ENCODE measurements at regions of chr12 and their contacts with region 1.

Region 1: DNA sequence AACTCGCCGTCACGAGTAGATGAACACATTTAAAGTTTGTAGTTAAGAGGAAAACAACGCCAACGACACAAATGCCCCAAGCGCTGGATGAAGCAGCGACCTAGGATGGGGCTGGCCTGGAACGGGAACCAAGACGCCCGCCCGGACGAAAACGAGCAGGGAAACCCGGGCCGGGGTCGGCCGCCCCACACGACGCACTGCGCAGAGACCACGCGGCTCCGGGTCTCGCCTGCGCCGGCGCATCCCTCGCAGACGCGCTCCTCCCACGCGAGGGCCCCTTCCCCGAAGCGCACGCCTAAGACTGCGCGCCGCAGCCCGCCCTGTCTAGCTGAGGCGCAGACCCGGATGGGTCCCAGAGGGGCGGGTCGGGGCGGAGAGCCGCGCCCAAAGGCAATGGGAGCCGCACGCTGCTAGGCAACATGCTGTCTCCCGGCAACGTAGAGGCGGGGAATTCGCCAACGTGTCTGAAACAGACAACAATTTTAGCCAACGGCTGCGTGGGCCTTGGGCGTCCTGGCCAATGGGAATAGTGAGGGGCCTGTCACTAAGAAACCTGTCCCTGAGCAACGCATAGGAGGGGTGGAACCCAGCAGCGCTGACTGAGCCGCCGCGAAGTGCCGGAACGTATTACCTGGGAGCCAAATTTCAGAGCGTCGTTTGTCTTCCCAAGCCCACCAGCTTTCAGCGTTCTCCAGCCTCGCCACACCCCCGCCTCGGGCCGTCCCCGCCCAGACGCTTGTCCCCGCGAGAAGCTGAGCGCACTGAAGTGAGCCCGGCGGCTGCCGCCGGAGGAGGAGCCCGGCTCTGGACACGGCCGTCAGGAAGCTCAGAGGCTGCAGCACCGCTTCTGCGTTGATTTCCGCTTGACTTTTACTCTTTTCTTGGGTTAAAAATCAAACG is 21.0 kb upstream of the CHFR start:
- DNase-seq: peak; percentile 99
- H3K4me3 Mint-ChIP-seq: peak overlapping the region; percentile 86
- H3K27ac Mint-ChIP-seq: peak overlapping the region; percentile 92
- H3K4me1 Mint-ChIP-seq: peaks cover 17% of the 10 kb centered on the region
- H3K27me3 Mint-ChIP-seq: peaks cover 4% of the 10 kb centered on the region

Region 2: GRCh38 chr12:132761032-132761920 is 147.1 kb before region 1 on chr12 and contains the start of gene ANKLE2:
- CTCF ChIA-PET with region 1: interaction called, 5 read pairs
- POLR2A ChIA-PET with region 1: interaction called, 3 read pairs
- intact Hi-C with region 1: loop called (anchors 2 kb)
- DNase-seq: peak; percentile 86
- H3K4me3 Mint-ChIP-seq: peak within 1 kb of the TSS; percentile 88
- H3K27ac Mint-ChIP-seq: peak within 1 kb of the TSS; percentile 97
- H3K4me1 Mint-ChIP-seq: peaks cover 26% of the 10 kb centered on the region
- H3K27me3 Mint-ChIP-seq: no peaks in the 10 kb centered on the region
- total RNA-seq, gene ANKLE2: 112 to 123 TPM

Region 3: GRCh38 chr12:132887513-132888351 is 20.7 kb before region 1 on chr12 and contains the start of gene CHFR:
- CTCF ChIA-PET with region 1: interaction called, 9 read pairs
- POLR2A ChIA-PET with region 1: interaction called, 5 read pairs
- intact Hi-C with region 1: loop called (anchors 1 kb)
- DNase-seq: peak; percentile 98
- H3K4me3 Mint-ChIP-seq: peak within 1 kb of the TSS; percentile 99
- H3K27ac Mint-ChIP-seq: peak within 1 kb of the TSS; percentile 100
- H3K4me1 Mint-ChIP-seq: peaks cover 17% of the 10 kb centered on the region
- H3K27me3 Mint-ChIP-seq: no peaks in the 10 kb centered on the region
- total RNA-seq, gene CHFR: 41.2 to 42.9 TPM

Region 4: DNA sequence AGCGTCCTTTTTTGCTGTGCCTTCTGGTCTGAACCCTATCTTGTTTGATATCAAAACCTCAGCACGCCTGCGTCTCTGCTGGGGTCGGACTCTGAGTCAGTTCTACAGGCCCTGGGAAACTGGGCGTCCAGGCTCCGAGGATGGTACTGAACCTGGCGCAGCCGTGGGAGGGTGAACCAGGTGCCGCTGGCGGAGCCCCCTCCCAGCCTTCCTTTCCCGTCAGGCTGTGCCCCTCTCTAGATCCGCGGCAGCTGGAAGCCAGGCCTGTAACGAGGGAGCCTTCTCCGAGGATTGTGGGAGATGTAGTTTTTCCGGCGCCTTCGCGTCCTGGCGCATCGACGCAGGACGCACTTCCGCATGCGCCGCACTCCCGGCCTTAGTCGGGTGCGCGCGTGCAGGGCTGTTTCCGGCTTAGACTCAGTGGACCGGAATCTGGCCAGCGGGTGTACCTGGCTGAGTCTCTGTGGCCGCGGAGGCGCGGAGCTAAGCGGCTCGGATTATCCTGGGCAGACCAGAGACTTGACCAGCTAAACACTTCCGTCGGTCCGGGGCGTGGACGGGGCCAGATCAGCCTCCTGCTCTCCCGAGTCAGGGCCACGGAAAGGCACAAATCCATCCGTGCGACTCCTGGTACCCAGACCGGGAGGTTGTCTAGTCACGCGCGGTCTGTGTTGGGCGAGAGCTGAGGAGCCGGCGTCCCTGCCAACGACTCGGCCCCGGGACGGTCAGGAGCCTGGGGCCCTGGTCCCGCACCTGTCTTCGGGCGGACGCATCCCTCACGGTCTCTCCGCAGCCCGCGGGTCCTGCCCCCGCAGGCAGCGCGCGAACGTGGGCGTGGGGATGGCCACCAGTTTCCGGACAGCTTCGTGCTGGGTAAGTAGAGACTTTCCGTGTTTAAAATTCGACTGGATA is 77.9 kb after region 1 on chr12 and contains the start of gene ZNF26:
- CTCF ChIA-PET with region 1: interaction called, 8 read pairs
- POLR2A ChIA-PET with region 1: interaction called, 4 read pairs
- intact Hi-C with region 1: loop called (anchors 1 kb)
- DNase-seq: peak; percentile 92
- H3K4me3 Mint-ChIP-seq: peak within 1 kb of the TSS; percentile 89
- H3K27ac Mint-ChIP-seq: peak within 1 kb of the TSS; percentile 94
- H3K4me1 Mint-ChIP-seq: peaks cover 27% of the 10 kb centered on the region
- H3K27me3 Mint-ChIP-seq: no peaks in the 10 kb centered on the region
- total RNA-seq, gene ZNF26: 10.2 to 10.8 TPM

Region 5: GRCh38 chr12:133130038-133130807 is 221.8 kb after region 1 on chr12 and contains the starts of genes ZNF10 and ZNF891:
- CTCF ChIA-PET with region 1: no interaction called
- POLR2A ChIA-PET with region 1: interaction called, 3 read pairs
- intact Hi-C with region 1: loop called (anchors 1 kb)
- DNase-seq: peak; percentile 98
- H3K4me3 Mint-ChIP-seq: peak within 1 kb of the TSS; percentile 97
- H3K27ac Mint-ChIP-seq: peak within 1 kb of the TSS; percentile 96
- H3K4me1 Mint-ChIP-seq: peaks cover 14% of the 10 kb centered on the region
- H3K27me3 Mint-ChIP-seq: no peaks in the 10 kb centered on the region
- total RNA-seq, gene ZNF10: 3.7 to 4.1 TPM
- total RNA-seq, gene ZNF891: 1.1 to 1.2 TPM